Lower lobe of right lung (tissue), 2 donors: ENCODE measurements at regions of chr14 and their contacts with region 1.

Region 1: DNA sequence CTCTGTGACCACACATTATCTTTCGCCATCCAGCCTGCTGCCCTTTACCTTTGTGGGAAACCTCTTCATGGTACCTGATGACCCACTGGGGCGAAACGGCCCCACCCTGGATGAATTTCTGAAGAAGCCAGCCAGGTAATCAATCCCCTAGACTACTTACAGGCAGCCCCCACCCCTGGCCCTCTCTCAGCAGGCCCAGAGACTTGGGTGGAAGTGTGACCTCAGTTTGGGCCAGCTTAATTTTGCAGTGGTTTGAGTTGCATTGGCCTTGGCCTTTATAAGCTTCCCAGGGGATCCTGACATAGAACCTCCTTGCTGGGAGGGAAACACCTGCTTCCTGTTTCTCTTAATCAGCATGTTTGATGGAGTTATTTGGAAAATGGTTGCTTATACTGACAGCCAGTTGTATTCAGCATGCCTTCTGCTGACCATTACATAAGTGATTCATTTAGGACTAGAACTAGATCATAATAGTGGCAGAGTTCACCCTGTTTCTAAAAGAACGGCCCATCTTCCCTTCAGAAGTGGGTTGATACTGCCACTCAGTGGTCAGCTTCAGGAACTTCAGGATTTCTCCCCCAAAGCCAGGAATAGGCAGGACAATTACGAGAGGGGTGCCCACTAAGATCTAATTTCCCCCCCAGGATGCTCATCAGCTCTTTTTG is 6.1 kb downstream of the SDR39U1 start:
- DNase-seq: no peak
- ATAC-seq: peak; percentile 58 to 61
- H3K4me3 ChIP-seq: no peak overlapping the region
- H3K27ac ChIP-seq: peak overlapping the region; percentile 70
- H3K4me1 ChIP-seq: peaks cover 71% of the 10 kb centered on the region
- H3K27me3 ChIP-seq: no peaks in the 10 kb centered on the region
- CTCF ChIP-seq: peak; percentile 76

Region 2: DNA sequence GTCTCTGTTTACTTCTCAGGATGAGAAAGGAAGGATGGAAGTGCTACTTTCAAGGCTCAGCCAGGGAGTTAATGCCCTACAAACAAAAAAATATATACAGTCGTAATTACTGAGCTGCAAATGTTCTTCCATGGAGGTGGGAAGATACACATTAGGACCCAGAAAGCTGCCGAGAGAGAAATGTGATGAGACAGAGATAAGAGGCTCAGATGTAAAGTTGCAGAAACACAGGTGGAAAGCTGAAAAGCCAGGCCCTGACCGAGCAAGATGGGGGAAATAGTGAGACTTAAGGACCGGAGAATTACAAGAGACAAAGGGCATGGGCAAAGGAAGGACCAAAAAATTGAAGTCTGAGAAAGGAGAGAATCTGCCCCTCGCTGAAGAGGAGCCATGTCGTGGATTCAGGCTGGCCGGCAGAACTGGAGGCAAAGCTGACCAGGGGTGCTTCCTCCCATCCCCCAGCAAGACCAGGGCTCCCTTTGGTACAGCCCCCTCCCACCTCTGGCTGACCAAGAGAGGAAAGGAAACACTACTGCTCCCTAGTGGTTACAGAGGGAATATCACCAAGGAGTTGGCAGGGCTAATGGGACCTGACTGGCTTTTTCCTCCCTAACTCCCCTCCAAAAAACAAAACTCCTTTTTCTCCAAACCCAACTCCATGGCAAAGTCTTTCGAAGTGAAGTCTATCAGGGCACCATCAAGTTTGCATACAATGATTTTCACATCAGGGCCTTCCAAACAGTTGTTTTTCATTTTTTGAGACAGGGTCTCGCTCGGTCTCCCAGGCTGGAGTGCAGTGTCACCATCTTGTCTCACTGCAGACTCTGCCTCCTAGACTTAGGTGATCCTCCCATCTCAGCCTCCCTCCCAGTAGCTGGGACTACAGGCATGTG is 897.0 kb before region 1 on chr14:
- intact Hi-C with region 1: no loop called
- DNase-seq: no peak
- ATAC-seq: peak; percentile 71 to 78
- H3K4me3 ChIP-seq: no peak overlapping the region
- H3K27ac ChIP-seq: no peak overlapping the region
- H3K4me1 ChIP-seq: no peaks in the 10 kb centered on the region
- H3K27me3 ChIP-seq: no peaks in the 10 kb centered on the region
- CTCF ChIP-seq: peak; percentile 77

Region 3: GRCh38 chr14:24329736-24330135 is 106.8 kb before region 1 on chr14:
- intact Hi-C with region 1: loop called (anchors 5 kb)
- DNase-seq: peak; percentile 91
- ATAC-seq: peak; percentile 31 to 65
- H3K4me3 ChIP-seq: no peak overlapping the region
- H3K27ac ChIP-seq: peak overlapping the region; percentile 60
- H3K4me1 ChIP-seq: peaks cover 66% of the 10 kb centered on the region
- H3K27me3 ChIP-seq: peaks cover 6% of the 10 kb centered on the region
- CTCF ChIP-seq: no peak